Heart left ventricle (tissue), 16 donors: ENCODE measurements at regions of chr2 and their contacts with region 1.

Region 1: GRCh38 chr2:219552382-219553167 is 8.7 kb downstream of the TMEM198 start:
- DNase-seq: peak; percentile 84 to 90 (median 88)
- ATAC-seq: peak; percentile 63 to 92 (median 86)
- H3K4me3 ChIP-seq: peak overlapping the region; percentile 27 to 75 (median 57)
- H3K27ac ChIP-seq: peak overlapping the region in 3 of 12 donors; percentile 19 to 57 (median 38)
- H3K4me1 ChIP-seq: peaks cover 0 to 21% (median 13%) of the 10 kb centered on the region in 12 donors
- H3K27me3 ChIP-seq: peaks cover 0 to 24% (median 3%) of the 10 kb centered on the region in 9 donors
- CTCF ChIP-seq: no peak
- POLR2A ChIP-seq: peak in 1 of 2 donors; percentile 23

Region 2: DNA sequence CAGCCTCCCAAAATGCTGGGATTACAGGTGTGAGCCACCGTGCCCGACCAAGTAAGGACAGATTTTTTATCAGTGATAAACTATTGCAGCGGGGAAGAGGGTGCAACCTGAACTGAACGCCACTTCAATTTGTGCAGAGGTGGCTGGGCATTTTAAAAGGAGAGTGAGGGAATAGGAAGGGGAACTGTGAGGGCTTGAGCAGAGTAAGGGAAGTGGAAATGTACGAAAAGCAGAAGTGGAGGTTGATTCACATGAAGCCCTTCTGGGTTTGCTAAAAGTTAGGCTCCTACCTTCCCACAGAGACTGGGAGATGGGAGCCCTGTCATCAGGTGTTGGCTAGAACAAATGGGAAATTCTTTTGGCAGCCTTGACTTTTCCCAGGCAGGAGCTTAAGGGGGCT is 51.2 kb after region 1 on chr2:
- intact Hi-C with region 1: loop called in 1 of 10 experiments (anchors 10 kb)
- DNase-seq: no peak
- ATAC-seq: no peak
- H3K4me3 ChIP-seq: no peak overlapping the region
- H3K27ac ChIP-seq: peak overlapping the region in 1 of 12 donors; percentile 38
- H3K4me1 ChIP-seq: peaks cover 0 to 10% (median 0%) of the 10 kb centered on the region in 12 donors
- H3K27me3 ChIP-seq: no peaks in the 10 kb centered on the region
- CTCF ChIP-seq: no peak
- POLR2A ChIP-seq: no peak